ENCODE measurements at regions of chr17 and their contacts with region 1.

Region 1: DNA sequence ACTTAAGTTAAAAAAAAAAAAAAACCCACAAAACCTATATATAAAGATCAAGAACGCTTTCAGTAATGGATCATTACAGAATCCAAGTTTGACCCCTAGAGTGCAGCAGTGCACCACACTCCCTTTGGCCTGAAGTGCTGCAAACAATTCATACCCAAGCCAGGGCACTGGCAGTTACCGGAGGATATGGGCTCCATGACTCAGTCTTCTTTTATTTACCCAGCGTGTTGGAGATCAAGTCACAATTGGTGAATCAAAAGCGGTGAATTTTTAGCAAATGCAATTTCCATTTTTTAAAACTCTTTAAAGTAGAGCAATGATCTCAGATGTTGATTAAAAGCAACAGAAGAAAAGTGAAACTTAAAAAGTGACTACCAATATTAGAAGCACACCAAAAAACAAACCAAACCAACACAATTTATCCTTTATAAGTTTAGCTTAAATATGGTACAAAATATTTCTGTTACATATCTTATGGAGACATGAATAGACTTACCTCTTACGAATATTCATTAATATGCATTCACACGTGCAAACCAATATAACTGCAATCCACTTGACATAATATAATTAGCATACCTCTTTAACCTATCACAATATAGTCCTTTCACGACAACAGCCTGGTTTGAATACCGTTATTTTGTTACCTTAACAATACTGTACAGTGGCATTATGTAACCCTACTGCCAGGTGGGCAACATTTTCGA is 46.3 kb downstream of the ZNF652 start:
- DNase-seq: peak; percentile 77
- H3K4me3 ChIP-seq: peak overlapping the region in 1 of 2 experiments; percentile 9; a peak in 1 of 4 replicates
- H3K27ac ChIP-seq: peak overlapping the region; percentile 11 to 59; a peak in 3 of 4 replicates
- H3K4me1 ChIP-seq: peaks cover 0 to 8% of the 10 kb centered on the region in 2 experiments
- H3K27me3 ChIP-seq: no peaks in the 10 kb centered on the region
- CTCF ChIP-seq: peak; percentile 100
- EP300 ChIP-seq: peak in 1 of 2 experiments; percentile 32; a peak in 1 of 4 replicates
- RAD21 ChIP-seq: peak; percentile 100

Region 2: DNA sequence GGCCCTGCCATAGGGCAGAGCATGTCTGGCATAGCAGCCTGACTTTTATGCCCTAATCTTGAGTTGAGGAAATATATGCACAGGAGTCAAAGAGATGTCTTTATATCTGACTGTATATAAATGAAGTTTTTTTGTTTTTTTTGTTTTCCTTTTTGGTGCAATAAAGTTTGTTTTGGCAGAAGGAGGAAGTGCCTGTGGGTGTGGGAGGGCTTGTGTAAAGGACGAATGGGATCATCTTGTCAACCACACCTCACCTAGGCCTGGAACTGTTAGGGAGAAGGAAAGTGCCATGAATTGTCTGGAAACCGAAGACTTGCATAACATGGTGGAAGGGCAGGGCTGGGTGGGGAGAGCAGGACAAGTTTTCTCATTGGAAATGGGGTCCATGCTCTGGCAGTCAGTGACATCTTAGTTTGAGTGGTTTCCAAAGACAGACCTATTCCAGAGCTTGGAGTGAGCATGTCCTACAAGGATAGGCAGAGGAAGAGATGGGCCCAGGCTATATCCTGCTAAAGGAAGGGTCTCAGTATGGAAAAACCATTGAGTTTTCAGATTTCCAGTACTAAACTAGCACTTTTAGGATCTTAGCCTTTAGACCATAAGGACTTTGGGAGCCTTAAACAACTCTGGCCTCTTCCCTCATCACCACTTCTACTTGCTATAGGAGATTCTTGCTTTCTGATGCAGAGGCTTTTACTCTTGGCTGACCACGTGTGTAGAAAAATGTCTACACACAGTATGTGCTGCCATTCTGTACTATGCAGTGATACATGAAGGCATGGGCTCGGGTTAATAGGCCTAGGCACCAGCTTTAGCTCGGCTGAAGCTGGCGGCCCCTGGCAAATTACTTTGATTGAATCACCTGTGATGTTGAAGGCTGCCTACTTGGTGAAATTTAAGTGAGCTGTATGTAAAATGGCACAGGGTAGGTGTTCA is 386.6 kb before region 1 on chr17:
- CTCF ChIA-PET with region 1: no interaction called
- POLR2A ChIA-PET with region 1: no interaction called
- DNase-seq: no peak
- H3K4me3 ChIP-seq: no peak overlapping the region
- H3K27ac ChIP-seq: peak overlapping the region in 1 of 2 experiments; percentile 3; a peak in 1 of 4 replicates
- H3K4me1 ChIP-seq: no peaks in the 10 kb centered on the region
- H3K27me3 ChIP-seq: no peaks in the 10 kb centered on the region
- CTCF ChIP-seq: no peak
- EP300 ChIP-seq: no peak
- RAD21 ChIP-seq: no peak

Region 3: GRCh38 chr17:49327835-49328784 is 12.4 kb after region 1 on chr17:
- CTCF ChIA-PET with region 1: interaction called, 17 read pairs
- POLR2A ChIA-PET with region 1: no interaction called
- DNase-seq: no peak
- H3K4me3 ChIP-seq: no peak overlapping the region
- H3K27ac ChIP-seq: no peak overlapping the region
- H3K4me1 ChIP-seq: no peaks in the 10 kb centered on the region
- H3K27me3 ChIP-seq: no peaks in the 10 kb centered on the region
- CTCF ChIP-seq: no peak
- EP300 ChIP-seq: no peak
- RAD21 ChIP-seq: no peak

Region 4: GRCh38 chr17:49343273-49343672 is 27.6 kb after region 1 on chr17:
- CTCF ChIA-PET with region 1: interaction called, 24 read pairs
- POLR2A ChIA-PET with region 1: no interaction called
- DNase-seq: no peak
- H3K4me3 ChIP-seq: no peak overlapping the region
- H3K27ac ChIP-seq: peak overlapping the region in 1 of 2 experiments; percentile 72; a peak in 2 of 4 replicates
- H3K4me1 ChIP-seq: peaks cover 0 to 25% of the 10 kb centered on the region in 2 experiments; a peak in 3 of 4 replicates
- H3K27me3 ChIP-seq: no peaks in the 10 kb centered on the region
- CTCF ChIP-seq: no peak
- EP300 ChIP-seq: peak in 1 of 2 experiments; percentile 41; a peak in 1 of 4 replicates
- RAD21 ChIP-seq: no peak

Region 5: DNA sequence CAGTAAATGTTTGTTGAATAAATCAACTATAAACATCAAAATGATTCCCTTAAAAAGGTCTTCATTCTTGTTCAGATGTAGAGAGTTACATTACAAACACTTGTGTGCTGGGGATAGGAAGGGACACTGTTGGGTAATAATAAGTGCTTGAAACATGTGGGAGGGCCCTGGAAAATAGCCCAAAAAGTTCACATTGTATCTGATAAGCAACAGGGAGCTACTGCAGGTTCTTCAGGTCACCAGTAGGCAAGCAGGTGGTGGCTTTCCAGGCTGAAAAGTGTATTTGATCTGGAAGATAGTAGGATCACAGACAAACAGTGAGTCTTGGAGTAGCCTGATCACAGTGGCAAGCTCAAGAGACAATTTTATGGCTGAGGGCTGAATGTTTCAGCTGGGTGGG is 65.4 kb after region 1 on chr17:
- CTCF ChIA-PET with region 1: interaction called, 15 read pairs
- POLR2A ChIA-PET with region 1: no interaction called
- DNase-seq: no peak
- H3K4me3 ChIP-seq: no peak overlapping the region
- H3K27ac ChIP-seq: no peak overlapping the region
- H3K4me1 ChIP-seq: peaks cover 0 to 10% of the 10 kb centered on the region in 2 experiments; a peak in 1 of 4 replicates
- H3K27me3 ChIP-seq: no peaks in the 10 kb centered on the region
- CTCF ChIP-seq: no peak
- EP300 ChIP-seq: no peak
- RAD21 ChIP-seq: no peak

Region 6: DNA sequence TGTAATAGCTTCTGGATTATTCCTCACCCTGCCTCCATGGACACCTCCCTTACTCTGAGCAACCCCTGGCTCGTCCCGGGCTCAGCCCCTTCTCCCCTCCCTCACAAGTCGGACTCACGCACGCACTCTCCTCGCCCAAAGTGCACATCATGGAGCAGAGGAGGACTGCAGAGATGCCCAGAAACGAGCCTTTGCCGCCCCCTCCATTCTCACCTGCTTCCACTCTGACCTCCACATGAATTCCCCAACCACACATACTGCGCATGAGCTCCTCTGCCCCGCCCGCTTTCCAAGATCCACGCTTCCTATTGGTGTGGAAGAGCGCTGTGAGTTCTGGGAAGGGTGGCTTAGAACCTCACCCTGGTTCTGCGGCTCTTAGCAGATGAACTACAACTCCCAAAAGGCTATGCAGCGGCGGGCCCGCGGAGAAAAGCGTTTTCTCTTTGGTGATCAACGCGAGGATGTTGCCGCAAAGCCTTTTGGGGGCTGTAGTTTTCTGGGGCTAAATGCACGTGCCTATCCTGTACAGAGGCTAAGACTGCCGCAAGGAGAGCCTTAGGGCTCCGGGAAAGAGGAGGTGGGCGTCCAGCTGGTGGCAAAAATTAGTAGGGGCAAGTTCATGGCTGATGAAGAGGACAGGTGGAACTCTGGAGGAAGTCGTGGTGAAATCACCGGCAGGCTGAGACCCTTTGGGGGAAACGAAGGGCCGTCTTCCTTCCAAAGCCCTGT is 99.1 kb after region 1 on chr17 and contains the start of gene PHB1:
- CTCF ChIA-PET with region 1: interaction called, 11 read pairs
- POLR2A ChIA-PET with region 1: no interaction called
- DNase-seq: peak; percentile 97
- H3K4me3 ChIP-seq: peak within 1 kb of the TSS; percentile 86 to 87
- H3K27ac ChIP-seq: peak within 1 kb of the TSS in 1 of 2 experiments; percentile 48; a peak in 1 of 4 replicates
- H3K4me1 ChIP-seq: peaks cover 0 to 11% of the 10 kb centered on the region in 2 experiments; a peak in 2 of 4 replicates
- H3K27me3 ChIP-seq: no peaks in the 10 kb centered on the region
- CTCF ChIP-seq: no peak
- EP300 ChIP-seq: no peak
- RAD21 ChIP-seq: no peak
- polyA plus RNA-seq, gene PHB1: 379 and 477 TPM in 2 replicates